ENCODE measurements at regions of chr12 and their contacts with region 1.

Region 1: GRCh38 chr12:54214553-54215406 is 26.0 kb upstream of the SMUG1 start:
- DNase-seq: peak; percentile 97
- ATAC-seq: peak; percentile 71
- H3K4me3 Mint-ChIP-seq: peak overlapping the region; percentile 16; the same call in 1 of the 2 replicates
- H3K27ac Mint-ChIP-seq: no peak overlapping the region
- H3K4me1 Mint-ChIP-seq: peaks cover 33% of the 10 kb centered on the region
- H3K27me3 Mint-ChIP-seq: peaks cover 79% of the 10 kb centered on the region
- CTCF ChIP-seq: peak; percentile 96

Region 2: DNA sequence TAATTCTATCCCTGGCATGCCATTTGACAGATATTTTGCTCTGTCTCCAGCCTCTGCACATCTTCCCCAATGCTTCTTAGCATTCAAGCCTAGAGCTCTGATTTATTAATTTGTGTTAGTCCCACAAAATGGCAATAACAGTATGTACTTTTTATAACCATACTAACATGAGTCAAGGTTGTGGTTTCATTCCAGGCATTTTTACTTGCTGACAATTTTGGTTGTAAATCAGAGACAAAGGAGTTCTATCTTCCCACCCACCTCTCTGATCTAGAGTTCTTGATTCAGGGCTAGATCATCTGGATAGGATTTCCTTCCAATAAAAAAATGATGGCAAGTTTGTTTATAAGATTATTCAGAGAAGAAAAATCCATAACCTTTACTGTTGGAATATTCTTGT is 444.5 kb before region 1 on chr12:
- CTCF ChIA-PET with region 1: no interaction called
- POLR2A ChIA-PET with region 1: no interaction called
- DNase-seq: no peak
- ATAC-seq: no peak
- H3K4me3 Mint-ChIP-seq: no peak overlapping the region
- H3K27ac Mint-ChIP-seq: no peak overlapping the region
- H3K4me1 Mint-ChIP-seq: no peaks in the 10 kb centered on the region
- H3K27me3 Mint-ChIP-seq: peaks cover 30% of the 10 kb centered on the region
- CTCF ChIP-seq: no peak

Region 3: DNA sequence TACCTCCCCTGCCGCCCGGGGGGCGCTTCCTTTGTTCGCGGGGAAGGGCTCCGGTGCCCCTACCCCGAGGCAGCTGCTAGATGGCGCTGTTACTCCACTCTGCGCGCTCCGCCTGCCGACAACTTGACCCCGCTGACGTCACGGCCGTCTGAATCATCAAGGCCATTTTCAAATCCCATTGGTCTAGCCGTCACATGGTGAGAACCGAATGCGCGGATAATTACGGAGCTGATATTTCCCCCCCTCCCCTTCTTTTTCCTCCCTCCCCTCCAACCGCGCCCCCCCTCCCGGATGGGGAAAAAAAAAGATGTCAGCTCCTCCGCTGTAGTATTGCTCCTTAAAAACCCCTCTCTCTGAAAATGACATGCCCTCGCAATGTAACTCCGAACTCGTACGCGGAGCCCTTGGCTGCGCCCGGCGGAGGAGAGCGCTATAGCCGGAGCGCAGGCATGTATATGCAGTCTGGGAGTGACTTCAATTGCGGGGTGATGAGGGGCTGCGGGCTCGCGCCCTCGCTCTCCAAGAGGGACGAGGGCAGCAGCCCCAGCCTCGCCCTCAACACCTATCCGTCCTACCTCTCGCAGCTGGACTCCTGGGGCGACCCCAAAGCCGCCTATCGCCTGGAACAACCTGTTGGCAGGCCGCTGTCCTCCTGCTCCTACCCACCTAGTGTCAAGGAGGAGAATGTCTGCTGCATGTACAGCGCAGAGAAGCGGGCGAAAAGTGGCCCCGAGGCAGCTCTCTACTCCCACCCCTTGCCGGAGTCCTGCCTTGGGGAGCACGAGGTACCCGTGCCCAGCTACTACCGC is 229.7 kb before region 1 on chr12 and contains the start of gene HOXC10:
- CTCF ChIA-PET with region 1: interaction called, 40 read pairs
- POLR2A ChIA-PET with region 1: no interaction called
- DNase-seq: peak; percentile 95
- ATAC-seq: peak; percentile 56
- H3K4me3 Mint-ChIP-seq: peak within 1 kb of the TSS; percentile 52
- H3K27ac Mint-ChIP-seq: no peak within 1 kb of the TSS
- H3K4me1 Mint-ChIP-seq: peaks cover 34% of the 10 kb centered on the region
- H3K27me3 Mint-ChIP-seq: peaks cover 100% of the 10 kb centered on the region
- CTCF ChIP-seq: peak; percentile 76
- total RNA-seq, gene HOXC10: 0.09 TPM in 1 of 3 replicates, not detected in the others

Region 4: DNA sequence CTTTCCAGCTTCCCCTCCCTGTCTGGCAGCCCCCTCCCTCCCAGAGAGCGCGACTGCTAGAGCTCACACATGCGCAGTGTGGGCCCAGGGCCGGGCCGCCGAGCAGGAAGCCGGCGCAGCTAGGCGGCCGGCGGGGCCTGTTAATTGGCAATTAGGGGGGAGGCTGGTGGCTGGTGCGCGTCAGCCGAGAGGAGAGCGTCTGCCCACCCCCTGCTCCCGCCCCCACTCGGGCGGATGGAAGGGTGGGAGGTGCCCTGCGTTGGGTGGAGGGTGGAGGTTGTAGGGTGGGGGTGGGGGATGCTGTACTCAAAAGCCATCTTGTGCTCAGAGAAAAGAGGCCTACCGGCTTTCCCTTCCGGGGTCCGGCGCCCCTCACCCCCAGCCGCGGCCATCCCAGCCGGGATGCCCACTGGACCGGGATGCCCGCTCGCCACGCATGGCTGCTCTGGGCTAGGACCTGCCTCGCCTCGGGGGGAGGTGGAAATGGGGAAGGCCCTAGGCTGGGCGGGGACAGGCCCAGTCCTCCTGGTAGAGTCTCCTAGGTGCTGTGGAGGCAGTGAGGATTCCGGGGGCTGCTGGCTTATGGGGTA is 196.8 kb before region 1 on chr12:
- CTCF ChIA-PET with region 1: interaction called, 18 read pairs
- POLR2A ChIA-PET with region 1: no interaction called
- DNase-seq: peak; percentile 83
- ATAC-seq: peak; percentile 57
- H3K4me3 Mint-ChIP-seq: peak overlapping the region; percentile 63
- H3K27ac Mint-ChIP-seq: no peak overlapping the region
- H3K4me1 Mint-ChIP-seq: peaks cover 26% of the 10 kb centered on the region
- H3K27me3 Mint-ChIP-seq: peaks cover 99% of the 10 kb centered on the region
- CTCF ChIP-seq: no peak

Region 5: DNA sequence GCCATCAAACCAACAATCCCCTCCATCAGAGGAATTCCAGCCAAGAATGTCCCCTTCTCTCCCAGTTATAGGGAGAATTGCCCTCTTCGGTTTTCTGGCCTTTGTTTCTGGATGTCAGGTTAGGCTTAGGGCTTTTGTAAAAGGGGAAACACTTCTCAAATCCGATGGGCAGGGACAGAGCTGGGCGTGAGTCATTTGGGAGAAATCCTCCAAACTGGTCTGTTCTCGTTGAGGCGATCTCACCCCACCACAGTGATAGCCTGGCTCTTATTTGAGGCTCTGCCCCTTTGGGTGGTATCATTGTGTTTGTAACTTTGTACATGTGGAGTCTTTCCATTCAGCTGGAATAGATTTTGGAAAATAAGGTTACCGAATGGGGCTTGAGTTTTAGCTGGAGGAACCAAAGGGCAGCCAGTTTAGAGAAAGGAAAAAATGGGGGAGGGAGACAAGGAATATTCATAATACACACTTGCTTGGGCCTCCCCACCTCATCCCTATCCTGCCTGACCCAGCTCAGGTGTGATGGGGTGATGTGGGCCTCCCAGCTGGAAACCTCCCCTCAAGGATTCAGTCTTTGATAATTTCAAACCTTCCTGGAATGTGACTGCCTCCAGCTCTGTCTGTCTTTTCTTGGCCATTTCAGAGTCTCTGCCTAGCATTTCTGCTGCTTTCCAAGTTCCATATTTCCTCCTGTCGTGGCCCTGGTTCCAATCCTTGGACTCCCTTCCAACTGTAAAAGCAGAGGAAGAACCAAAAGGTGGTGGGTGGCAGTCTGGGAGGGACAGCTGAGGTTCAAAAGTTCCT is 153.6 kb before region 1 on chr12:
- CTCF ChIA-PET with region 1: no interaction called
- POLR2A ChIA-PET with region 1: no interaction called
- DNase-seq: no peak
- ATAC-seq: no peak
- H3K4me3 Mint-ChIP-seq: no peak overlapping the region
- H3K27ac Mint-ChIP-seq: no peak overlapping the region
- H3K4me1 Mint-ChIP-seq: peaks cover 43% of the 10 kb centered on the region
- H3K27me3 Mint-ChIP-seq: peaks cover 98% of the 10 kb centered on the region
- CTCF ChIP-seq: no peak

Region 6: DNA sequence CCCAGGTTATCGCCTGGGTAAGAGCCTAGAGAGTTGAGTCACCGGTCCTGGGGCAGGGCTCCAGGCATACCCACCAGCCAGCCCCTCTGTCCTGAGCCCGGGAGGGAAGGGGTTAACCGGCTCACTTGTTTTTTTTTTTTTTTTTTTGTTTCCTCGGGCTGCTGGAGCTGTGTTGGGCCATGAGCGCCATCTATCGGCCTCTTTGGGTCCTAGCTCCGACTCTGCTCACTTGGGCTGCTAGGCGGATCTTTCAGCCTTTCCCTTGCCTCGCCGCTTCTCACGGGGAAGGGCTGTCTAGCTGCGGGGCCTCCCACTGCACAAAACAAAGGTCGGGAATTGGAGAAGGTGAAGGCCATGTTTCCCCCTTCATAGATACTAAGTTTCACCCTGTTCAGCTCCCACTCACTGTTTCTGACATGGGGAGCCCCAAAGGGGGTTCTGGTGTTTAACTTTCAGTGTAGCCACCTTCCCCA is 23.2 kb before region 1 on chr12:
- CTCF ChIA-PET with region 1: interaction called, 40 read pairs
- POLR2A ChIA-PET with region 1: no interaction called
- DNase-seq: peak; percentile 87
- ATAC-seq: peak; percentile 81
- H3K4me3 Mint-ChIP-seq: no peak overlapping the region
- H3K27ac Mint-ChIP-seq: no peak overlapping the region
- H3K4me1 Mint-ChIP-seq: peaks cover 18% of the 10 kb centered on the region
- H3K27me3 Mint-ChIP-seq: peaks cover 73% of the 10 kb centered on the region
- CTCF ChIP-seq: peak; percentile 84

Region 7: GRCh38 chr12:54279866-54280467 is 65.2 kb after region 1 on chr12 and contains the start of gene CBX5:
- CTCF ChIA-PET with region 1: interaction called, 14 read pairs
- POLR2A ChIA-PET with region 1: interaction called, 7 read pairs
- DNase-seq: peak; percentile 99
- ATAC-seq: peak; percentile 53
- H3K4me3 Mint-ChIP-seq: no peak within 1 kb of the TSS
- H3K27ac Mint-ChIP-seq: no peak within 1 kb of the TSS
- H3K4me1 Mint-ChIP-seq: peaks cover 58% of the 10 kb centered on the region
- H3K27me3 Mint-ChIP-seq: no peaks in the 10 kb centered on the region
- CTCF ChIP-seq: no peak
- total RNA-seq, gene CBX5: 182 to 218 TPM (median 216 TPM) in 3 replicates

Region 8: GRCh38 chr12:54368709-54369583 is 154.2 kb after region 1 on chr12:
- CTCF ChIA-PET with region 1: interaction called, 17 read pairs
- POLR2A ChIA-PET with region 1: interaction called, 3 read pairs
- DNase-seq: peak; percentile 90
- ATAC-seq: peak; percentile 49
- H3K4me3 Mint-ChIP-seq: peak overlapping the region; percentile 75
- H3K27ac Mint-ChIP-seq: no peak overlapping the region
- H3K4me1 Mint-ChIP-seq: peaks cover 24% of the 10 kb centered on the region
- H3K27me3 Mint-ChIP-seq: peaks cover 49% of the 10 kb centered on the region
- CTCF ChIP-seq: peak; percentile 73

Measured in WTC11 (cell line).